HepG2 (cell line): ENCODE measurements at regions of chr3 and their contacts with region 1.

Region 1: DNA sequence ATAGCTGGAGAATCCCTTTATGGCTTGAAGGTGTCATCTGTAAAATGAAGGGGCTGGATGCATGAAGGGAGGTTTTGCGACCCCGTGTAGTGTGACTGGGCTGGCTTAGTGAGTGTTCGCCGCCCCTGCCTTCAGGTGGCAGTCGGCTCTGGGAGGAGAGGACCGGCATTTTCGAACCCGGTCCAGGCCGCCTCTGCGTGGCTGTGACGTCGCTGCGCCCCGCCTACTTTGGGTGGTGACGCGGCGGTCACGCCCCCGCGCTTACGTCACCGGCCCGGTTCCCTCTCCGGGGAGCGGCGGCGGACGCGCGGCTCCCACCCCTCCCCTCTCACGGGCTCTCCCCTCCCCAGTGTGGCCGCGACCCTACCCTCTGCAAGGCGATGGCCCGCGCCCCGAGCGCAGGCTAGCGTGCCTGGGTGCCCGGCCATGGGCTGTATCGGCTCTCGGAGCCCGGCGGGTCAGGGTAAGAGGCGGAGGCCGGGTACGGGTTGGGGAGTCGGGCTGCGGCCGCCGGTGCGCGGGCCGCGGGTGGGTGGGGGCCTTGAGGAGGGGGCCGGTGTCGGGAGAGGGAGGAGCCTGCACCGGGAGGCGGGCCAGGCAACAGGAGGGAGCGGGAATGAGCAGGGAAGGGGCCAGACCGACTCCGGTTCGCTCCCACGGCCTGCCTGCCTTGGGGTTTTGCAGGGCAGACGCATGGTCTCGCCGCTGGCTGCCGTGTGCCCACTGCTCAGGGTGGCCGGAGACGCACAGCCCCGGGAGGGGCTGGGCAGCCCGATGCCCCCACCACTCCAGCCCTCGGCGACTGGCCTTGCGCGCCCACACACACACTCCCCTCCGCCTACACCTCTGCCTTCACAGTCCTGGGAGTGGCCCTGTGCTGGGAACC is 1.5 kb upstream of the FAM131A start:
- DNase-seq: peak; percentile 54
- ATAC-seq: peak; percentile 66
- H3K4me3 ChIP-seq: peak overlapping the region; percentile 67 to 94 (median 80)
- H3K27ac ChIP-seq: peak overlapping the region; percentile 84
- H3K4me1 ChIP-seq: peaks cover 18% of the 10 kb centered on the region
- H3K27me3 ChIP-seq: no peaks in the 10 kb centered on the region; a peak in 1 of 5 replicates
- CTCF ChIP-seq: peak; percentile 46
- EP300 ChIP-seq: no peak; a peak in 1 of 4 replicates
- POLR2A ChIP-seq: peak; percentile 18 to 67; a peak in 3 of 4 replicates
- RAD21 ChIP-seq: no peak

Region 2: GRCh38 chr3:184314700-184315542 is 21.0 kb before region 1 on chr3:
- CTCF ChIA-PET with region 1: no interaction called
- POLR2A ChIA-PET with region 1: interaction called, 10 read pairs
- in situ Hi-C with region 1: no loop called
- intact Hi-C with region 1: no loop called
- DNase-seq: peak; percentile 48
- ATAC-seq: peak; percentile 60
- H3K4me3 ChIP-seq: peak overlapping the region; percentile 68 to 93 (median 86)
- H3K27ac ChIP-seq: peak overlapping the region; percentile 91
- H3K4me1 ChIP-seq: peaks cover 44% of the 10 kb centered on the region
- H3K27me3 ChIP-seq: no peaks in the 10 kb centered on the region; a peak in 1 of 5 replicates
- CTCF ChIP-seq: no peak
- EP300 ChIP-seq: no peak
- POLR2A ChIP-seq: peak; percentile 37; a peak in 3 of 4 replicates
- RAD21 ChIP-seq: no peak

Region 3: GRCh38 chr3:184362668-184363540 is 27.0 kb after region 1 on chr3:
- CTCF ChIA-PET with region 1: no interaction called
- POLR2A ChIA-PET with region 1: interaction called, 10 read pairs
- in situ Hi-C with region 1: no loop called
- intact Hi-C with region 1: no loop called
- DNase-seq: peak; percentile 98
- ATAC-seq: peak; percentile 81
- H3K4me3 ChIP-seq: peak overlapping the region; percentile 93 to 96 (median 96)
- H3K27ac ChIP-seq: peak overlapping the region; percentile 97
- H3K4me1 ChIP-seq: peaks cover 55% of the 10 kb centered on the region
- H3K27me3 ChIP-seq: no peaks in the 10 kb centered on the region; a peak in 1 of 5 replicates
- CTCF ChIP-seq: peak; percentile 88
- EP300 ChIP-seq: peak; percentile 9 to 39; a peak in 1 of 4 replicates
- POLR2A ChIP-seq: peak in 1 of 2 experiments; percentile 70; a peak in 2 of 4 replicates
- RAD21 ChIP-seq: peak; percentile 74

Region 4: DNA sequence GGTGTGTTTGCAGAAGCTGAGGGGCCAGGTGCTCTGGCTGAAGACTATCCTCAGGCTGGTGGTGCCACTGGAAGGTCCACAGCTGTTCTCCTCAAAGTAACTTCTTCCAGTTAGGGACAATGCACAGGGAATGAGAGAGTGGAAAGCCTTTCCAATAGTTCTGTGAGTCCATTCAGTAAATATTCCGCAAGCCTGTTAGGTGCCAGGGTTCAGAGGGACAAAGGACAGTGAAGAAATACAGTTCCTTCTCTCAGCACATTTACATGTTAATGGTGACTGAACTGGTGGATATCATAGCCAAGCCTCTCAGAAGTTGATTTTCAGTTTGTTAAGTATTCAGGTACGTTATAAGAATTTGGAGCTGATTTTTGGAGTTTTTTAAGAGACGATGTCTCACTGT is 694.5 kb after region 1 on chr3:
- CTCF ChIA-PET with region 1: no interaction called
- POLR2A ChIA-PET with region 1: no interaction called
- in situ Hi-C with region 1: no loop called
- intact Hi-C with region 1: no loop called
- DNase-seq: peak; percentile 43
- ATAC-seq: peak; percentile 96
- H3K4me3 ChIP-seq: no peak overlapping the region
- H3K27ac ChIP-seq: peak overlapping the region; percentile 66
- H3K4me1 ChIP-seq: peaks cover 10% of the 10 kb centered on the region
- H3K27me3 ChIP-seq: no peaks in the 10 kb centered on the region
- CTCF ChIP-seq: no peak
- EP300 ChIP-seq: no peak
- POLR2A ChIP-seq: no peak
- RAD21 ChIP-seq: no peak